ENCODE measurements at regions of chr11 and their contacts with region 1.

Region 1: DNA sequence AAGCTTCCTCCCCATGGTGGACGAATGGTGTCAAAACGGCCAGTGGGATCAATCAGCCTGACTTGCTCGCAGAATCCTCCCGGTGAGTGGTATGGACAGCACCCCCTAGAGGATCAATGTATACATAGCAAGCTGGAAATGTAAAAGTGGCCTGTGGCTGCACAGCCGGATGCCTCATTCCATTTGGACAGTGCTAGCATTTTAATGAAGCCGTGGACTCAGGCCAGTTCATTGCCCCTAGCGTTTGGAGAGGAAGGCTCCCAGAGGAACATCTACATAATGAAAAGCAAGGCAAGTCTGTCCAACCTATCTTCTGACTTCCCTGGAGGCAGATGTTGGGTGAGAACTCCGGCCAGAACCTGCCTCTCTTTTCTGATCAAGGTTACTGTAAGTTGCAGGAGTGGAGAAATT is 942.3 kb downstream of the NTM start:
- DNase-seq: peak; percentile 46
- ATAC-seq: peak; percentile 93
- H3K4me3 ChIP-seq: no peak overlapping the region
- H3K27ac ChIP-seq: no peak overlapping the region
- H3K4me1 ChIP-seq: peaks cover 5% of the 10 kb centered on the region
- H3K27me3 ChIP-seq: no peaks in the 10 kb centered on the region
- CTCF ChIP-seq: peak; percentile 56
- POLR2A ChIP-seq: no peak
- RAD21 ChIP-seq: no peak

Region 2: GRCh38 chr11:131875611-131876010 is 437.1 kb before region 1 on chr11:
- CTCF ChIA-PET with region 1: no interaction called
- POLR2A ChIA-PET with region 1: no interaction called
- dilution Hi-C with region 1: no loop called
- in situ Hi-C with region 1: loop called (anchors 10 kb)
- intact Hi-C with region 1: no loop called
- DNase-seq: peak; percentile 57
- ATAC-seq: no peak
- H3K4me3 ChIP-seq: no peak overlapping the region
- H3K27ac ChIP-seq: no peak overlapping the region
- H3K4me1 ChIP-seq: no peaks in the 10 kb centered on the region
- H3K27me3 ChIP-seq: no peaks in the 10 kb centered on the region
- CTCF ChIP-seq: no peak
- POLR2A ChIP-seq: no peak
- RAD21 ChIP-seq: no peak